SK-N-SH (cell line): ENCODE measurements at regions of chr6 and their contacts with region 1.

Region 1: DNA sequence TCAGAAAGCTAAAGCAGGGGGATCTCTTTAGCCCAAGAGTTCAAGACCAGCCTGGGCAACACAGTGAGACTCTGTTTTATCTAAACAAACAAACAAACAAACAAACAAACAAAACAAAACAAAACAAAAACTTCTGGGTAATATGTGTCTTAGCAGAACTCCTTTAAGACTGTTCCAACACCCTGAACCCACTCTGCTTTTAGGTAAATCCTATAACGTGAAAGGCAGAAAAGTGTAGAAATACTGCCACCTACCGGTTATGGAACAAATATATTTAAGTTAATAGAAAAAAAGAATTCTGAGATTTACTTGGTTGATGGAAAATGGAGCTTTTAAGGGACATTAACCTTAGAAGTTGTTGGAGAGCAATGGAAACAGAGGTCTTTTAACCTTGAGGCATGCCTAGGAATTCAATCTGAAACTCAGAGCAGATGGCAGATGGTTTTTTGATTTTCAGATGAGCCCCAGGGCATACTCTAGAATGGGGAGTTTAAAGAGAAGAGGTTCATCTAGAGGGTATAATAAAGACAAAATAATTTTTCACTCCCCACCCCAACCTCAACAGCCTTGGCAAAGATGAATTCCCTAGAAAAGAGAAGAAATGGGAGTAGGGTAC is 38.5 kb downstream of the SOD2 start:
- DNase-seq: peak; percentile 41
- H3K4me3 ChIP-seq: no peak overlapping the region
- H3K27ac ChIP-seq: no peak overlapping the region
- H3K4me1 ChIP-seq: no peaks in the 10 kb centered on the region
- H3K27me3 ChIP-seq: no peaks in the 10 kb centered on the region
- CTCF ChIP-seq: peak; percentile 78
- EP300 ChIP-seq: no peak
- RAD21 ChIP-seq: peak; percentile 75

Region 2: DNA sequence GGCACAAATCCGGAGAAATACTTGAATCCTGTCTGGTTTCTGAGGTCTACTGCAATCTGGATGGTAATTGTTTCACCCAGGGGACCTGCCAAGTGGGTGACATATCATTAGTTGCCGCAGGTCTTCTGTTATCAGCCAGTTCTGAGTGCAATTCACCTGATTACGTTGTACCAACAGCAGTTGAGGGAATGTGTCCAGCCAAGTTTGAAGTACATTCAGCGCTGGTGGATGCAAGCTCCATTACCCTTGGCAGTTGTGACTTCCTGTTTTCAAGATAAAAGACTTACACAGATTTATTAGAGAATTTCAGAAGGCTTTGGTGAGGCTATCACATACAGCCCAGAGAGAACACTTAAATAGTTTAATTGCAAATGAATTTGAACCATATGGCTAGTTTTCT is 442.6 kb before region 1 on chr6:
- CTCF ChIA-PET with region 1: interaction called, 35 read pairs
- POLR2A ChIA-PET with region 1: no interaction called
- DNase-seq: no peak
- H3K4me3 ChIP-seq: no peak overlapping the region
- H3K27ac ChIP-seq: no peak overlapping the region
- H3K4me1 ChIP-seq: peaks cover 0 to 2% of the 10 kb centered on the region in 2 experiments; a peak in 1 of 4 replicates
- H3K27me3 ChIP-seq: peaks cover 19% of the 10 kb centered on the region; the same call in 1 of the 2 replicates
- CTCF ChIP-seq: no peak
- EP300 ChIP-seq: no peak
- RAD21 ChIP-seq: no peak

Region 3: DNA sequence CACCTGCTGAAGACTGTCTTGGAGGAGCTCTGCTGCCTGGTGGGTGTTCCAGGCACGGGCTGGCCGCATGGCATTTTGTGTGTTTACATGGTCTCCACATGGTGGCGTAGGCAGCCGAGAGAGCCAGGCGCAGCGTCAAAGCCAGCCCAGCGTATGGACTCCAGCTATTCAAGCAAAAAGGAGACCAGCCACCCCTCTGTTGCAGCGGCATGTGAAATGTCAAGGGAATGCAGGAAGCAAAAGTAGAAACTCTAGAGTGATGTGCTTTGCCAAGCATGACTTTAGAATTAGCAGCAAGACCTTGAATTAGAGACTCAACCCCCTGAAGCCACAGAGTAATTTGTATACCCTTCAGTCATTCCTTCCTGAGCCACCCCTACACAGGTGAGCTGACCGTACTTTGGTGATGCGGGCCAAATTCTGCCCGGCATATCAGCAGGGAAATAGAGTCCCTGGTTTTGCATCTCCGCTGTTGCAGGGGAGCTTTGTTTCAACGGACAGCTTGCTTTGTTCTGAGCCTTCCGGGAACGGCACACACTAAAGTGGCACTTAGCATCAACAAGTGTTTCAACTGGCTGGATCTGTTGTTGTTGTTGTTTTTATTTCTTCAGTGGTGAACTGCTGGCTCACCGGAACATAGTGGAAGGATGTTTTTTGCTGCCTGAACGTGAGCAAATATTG is 436.9 kb before region 1 on chr6:
- CTCF ChIA-PET with region 1: interaction called, 35 read pairs
- POLR2A ChIA-PET with region 1: no interaction called
- DNase-seq: peak; percentile 72
- H3K4me3 ChIP-seq: no peak overlapping the region
- H3K27ac ChIP-seq: no peak overlapping the region
- H3K4me1 ChIP-seq: no peaks in the 10 kb centered on the region
- H3K27me3 ChIP-seq: peaks cover 44% of the 10 kb centered on the region
- CTCF ChIP-seq: peak; percentile 57
- EP300 ChIP-seq: no peak
- RAD21 ChIP-seq: peak; percentile 72

Region 4: GRCh38 chr6:159633196-159633595 is 21.4 kb before region 1 on chr6:
- CTCF ChIA-PET with region 1: interaction called, 40 read pairs
- POLR2A ChIA-PET with region 1: no interaction called
- DNase-seq: peak; percentile 47
- H3K4me3 ChIP-seq: no peak overlapping the region
- H3K27ac ChIP-seq: no peak overlapping the region
- H3K4me1 ChIP-seq: no peaks in the 10 kb centered on the region
- H3K27me3 ChIP-seq: no peaks in the 10 kb centered on the region
- CTCF ChIP-seq: peak; percentile 77
- EP300 ChIP-seq: no peak
- RAD21 ChIP-seq: peak; percentile 39; the same call in 1 of the 2 replicates

Region 5: GRCh38 chr6:159665868-159666635 is 11.5 kb after region 1 on chr6:
- CTCF ChIA-PET with region 1: interaction called, 17 read pairs
- POLR2A ChIA-PET with region 1: no interaction called
- DNase-seq: no peak
- H3K4me3 ChIP-seq: no peak overlapping the region
- H3K27ac ChIP-seq: no peak overlapping the region
- H3K4me1 ChIP-seq: no peaks in the 10 kb centered on the region
- H3K27me3 ChIP-seq: no peaks in the 10 kb centered on the region
- CTCF ChIP-seq: no peak
- EP300 ChIP-seq: no peak
- RAD21 ChIP-seq: no peak

Region 6: GRCh38 chr6:159679091-159680077 is 24.8 kb after region 1 on chr6:
- CTCF ChIA-PET with region 1: interaction called, 11 read pairs
- POLR2A ChIA-PET with region 1: no interaction called
- DNase-seq: no peak
- H3K4me3 ChIP-seq: no peak overlapping the region
- H3K27ac ChIP-seq: no peak overlapping the region
- H3K4me1 ChIP-seq: no peaks in the 10 kb centered on the region
- H3K27me3 ChIP-seq: no peaks in the 10 kb centered on the region
- CTCF ChIP-seq: no peak
- EP300 ChIP-seq: no peak
- RAD21 ChIP-seq: no peak